Heart left ventricle (tissue), 16 donors: ENCODE measurements at regions of chr1 and their contacts with region 1.

Region 1: DNA sequence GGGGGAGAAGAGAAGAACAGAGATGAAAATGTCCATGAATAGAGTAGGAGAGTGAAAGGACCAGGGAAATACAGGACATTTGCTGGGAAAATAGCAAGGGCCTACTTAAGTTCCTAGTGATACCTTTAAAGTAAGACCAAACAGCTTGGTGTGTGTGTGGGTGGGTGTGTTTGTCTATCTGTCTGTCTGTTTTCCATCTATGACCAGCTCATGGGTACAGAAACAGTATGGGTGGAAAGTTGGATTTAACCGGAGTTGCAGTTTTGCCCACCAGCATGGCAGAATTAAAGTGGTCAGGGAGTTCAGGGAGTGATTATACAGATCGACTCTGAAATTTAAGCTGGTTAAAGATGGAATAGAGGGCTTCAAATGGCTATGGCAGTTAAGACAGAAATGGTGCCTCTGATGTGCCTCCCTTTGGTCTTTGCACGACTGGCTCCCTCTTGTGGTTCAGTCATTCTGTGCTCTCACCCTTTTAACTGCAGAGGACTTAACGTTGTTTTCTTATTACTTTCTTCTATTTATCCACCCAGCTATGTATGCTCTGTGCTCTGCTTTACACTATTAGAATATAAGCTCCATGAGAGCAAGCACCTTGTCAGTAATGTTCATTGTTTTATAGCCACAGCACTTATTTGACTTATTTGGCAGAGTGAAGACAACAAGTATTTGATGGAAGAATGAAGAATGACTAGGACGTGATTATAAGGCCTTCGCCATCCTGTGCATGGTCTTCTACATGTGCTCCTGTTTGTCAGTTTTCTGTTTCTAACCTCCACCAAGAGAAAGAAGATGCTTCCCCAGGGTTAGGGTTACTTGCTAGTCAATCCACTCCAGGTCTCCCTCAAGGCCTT is 72.7 kb upstream of the AK4 start:
- DNase-seq: peak in 3 of 5 donors; percentile 37 to 59 (median 53)
- ATAC-seq: peak; percentile 65 to 89 (median 83)
- H3K4me3 ChIP-seq: no peak overlapping the region
- H3K27ac ChIP-seq: no peak overlapping the region
- H3K4me1 ChIP-seq: no peaks in the 10 kb centered on the region
- H3K27me3 ChIP-seq: no peaks in the 10 kb centered on the region
- CTCF ChIP-seq: peak; percentile 59 to 81 (median 73)
- POLR2A ChIP-seq: no peak

Region 2: GRCh38 chr1:64856553-64856952 is 218.8 kb before region 1 on chr1:
- intact Hi-C with region 1: loop called in 3 of 10 experiments (anchors 1 to 10 kb)
- DNase-seq: peak in 1 of 5 donors; percentile 43
- ATAC-seq: peak in 2 of 4 donors; percentile 23 to 30
- H3K4me3 ChIP-seq: no peak overlapping the region
- H3K27ac ChIP-seq: peak overlapping the region in 1 of 12 donors; percentile 27
- H3K4me1 ChIP-seq: peaks cover 0 to 6% (median 0%) of the 10 kb centered on the region in 12 donors
- H3K27me3 ChIP-seq: no peaks in the 10 kb centered on the region
- CTCF ChIP-seq: no peak
- POLR2A ChIP-seq: no peak

Region 3: GRCh38 chr1:64864018-64864940 is 211.1 kb before region 1 on chr1:
- intact Hi-C with region 1: loop called in 3 of 10 experiments (anchors 1 to 10 kb)
- DNase-seq: peak; percentile 63 to 88 (median 77)
- ATAC-seq: peak; percentile 45 to 94 (median 85)
- H3K4me3 ChIP-seq: no peak overlapping the region
- H3K27ac ChIP-seq: peak overlapping the region in 9 of 12 donors; percentile 17 to 85 (median 39)
- H3K4me1 ChIP-seq: peaks cover 0 to 28% (median 5%) of the 10 kb centered on the region in 12 donors
- H3K27me3 ChIP-seq: no peaks in the 10 kb centered on the region
- CTCF ChIP-seq: no peak
- POLR2A ChIP-seq: no peak

Region 4: DNA sequence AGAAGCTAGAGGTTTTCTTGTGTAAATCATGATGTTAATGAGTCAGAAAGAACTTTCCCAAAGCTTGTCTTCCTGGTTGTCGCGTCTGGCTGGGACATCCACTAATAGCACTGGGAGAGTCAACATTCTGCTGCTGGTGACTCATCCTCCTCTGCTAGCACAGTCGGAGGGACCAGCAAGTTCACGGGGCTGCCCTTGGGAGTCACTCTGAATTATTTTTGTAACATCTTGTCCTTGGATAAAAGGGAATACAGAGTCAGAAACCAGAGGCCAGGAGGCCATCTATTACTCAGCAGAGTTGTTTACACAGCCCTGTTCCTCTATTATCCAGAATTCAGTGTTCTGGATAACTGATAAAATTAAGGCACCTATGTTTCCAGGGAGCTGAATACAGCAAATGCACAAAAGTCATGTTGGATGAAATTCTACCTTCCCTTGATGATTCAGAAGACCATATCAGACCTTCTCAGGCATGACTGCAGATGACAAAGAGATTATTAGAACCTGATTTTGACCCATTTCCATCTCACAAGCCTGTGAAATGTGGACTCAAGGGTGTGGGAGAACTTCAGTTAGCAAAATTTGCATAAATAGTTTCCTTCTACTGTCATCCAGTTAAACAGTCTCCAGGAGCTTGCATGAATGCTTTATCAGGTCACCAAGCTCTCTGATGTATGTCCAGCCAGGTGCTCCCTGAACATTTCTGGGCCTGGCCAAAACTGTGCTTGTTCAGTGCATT is 177.1 kb before region 1 on chr1:
- intact Hi-C with region 1: no loop called
- DNase-seq: peak; percentile 81 to 93 (median 87)
- ATAC-seq: peak; percentile 95 to 98 (median 98)
- H3K4me3 ChIP-seq: no peak overlapping the region
- H3K27ac ChIP-seq: peak overlapping the region; percentile 67 to 87 (median 81)
- H3K4me1 ChIP-seq: peaks cover 5 to 87% (median 37%) of the 10 kb centered on the region in 12 donors
- H3K27me3 ChIP-seq: no peaks in the 10 kb centered on the region
- CTCF ChIP-seq: no peak
- POLR2A ChIP-seq: no peak

Region 5: DNA sequence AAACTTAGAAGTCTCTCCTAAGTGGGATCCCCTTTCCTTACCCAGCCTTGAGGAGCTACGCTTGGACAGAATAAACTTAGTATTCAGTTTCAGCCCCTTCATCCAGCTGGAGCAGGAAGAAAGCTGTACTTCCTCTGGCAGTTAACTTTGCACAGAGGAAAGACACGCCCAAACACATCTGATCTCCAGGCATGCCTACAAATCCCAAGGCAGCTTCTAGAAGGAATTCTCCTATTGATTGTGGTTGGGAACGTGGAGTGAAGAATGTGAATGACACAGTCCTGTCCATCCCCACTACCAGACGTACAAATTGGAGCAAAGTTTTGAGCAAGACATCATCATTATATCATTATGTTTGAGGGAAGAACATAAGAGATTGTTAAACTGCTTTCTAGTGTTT is 66.0 kb after region 1 on chr1:
- intact Hi-C with region 1: loop called in 2 of 10 experiments (anchors 5 kb)
- DNase-seq: no peak
- ATAC-seq: peak in 3 of 4 donors; percentile 29 to 74 (median 39)
- H3K4me3 ChIP-seq: no peak overlapping the region
- H3K27ac ChIP-seq: no peak overlapping the region
- H3K4me1 ChIP-seq: peaks cover 0 to 10% (median 4%) of the 10 kb centered on the region in 12 donors
- H3K27me3 ChIP-seq: no peaks in the 10 kb centered on the region
- CTCF ChIP-seq: no peak
- POLR2A ChIP-seq: no peak

Region 6: DNA sequence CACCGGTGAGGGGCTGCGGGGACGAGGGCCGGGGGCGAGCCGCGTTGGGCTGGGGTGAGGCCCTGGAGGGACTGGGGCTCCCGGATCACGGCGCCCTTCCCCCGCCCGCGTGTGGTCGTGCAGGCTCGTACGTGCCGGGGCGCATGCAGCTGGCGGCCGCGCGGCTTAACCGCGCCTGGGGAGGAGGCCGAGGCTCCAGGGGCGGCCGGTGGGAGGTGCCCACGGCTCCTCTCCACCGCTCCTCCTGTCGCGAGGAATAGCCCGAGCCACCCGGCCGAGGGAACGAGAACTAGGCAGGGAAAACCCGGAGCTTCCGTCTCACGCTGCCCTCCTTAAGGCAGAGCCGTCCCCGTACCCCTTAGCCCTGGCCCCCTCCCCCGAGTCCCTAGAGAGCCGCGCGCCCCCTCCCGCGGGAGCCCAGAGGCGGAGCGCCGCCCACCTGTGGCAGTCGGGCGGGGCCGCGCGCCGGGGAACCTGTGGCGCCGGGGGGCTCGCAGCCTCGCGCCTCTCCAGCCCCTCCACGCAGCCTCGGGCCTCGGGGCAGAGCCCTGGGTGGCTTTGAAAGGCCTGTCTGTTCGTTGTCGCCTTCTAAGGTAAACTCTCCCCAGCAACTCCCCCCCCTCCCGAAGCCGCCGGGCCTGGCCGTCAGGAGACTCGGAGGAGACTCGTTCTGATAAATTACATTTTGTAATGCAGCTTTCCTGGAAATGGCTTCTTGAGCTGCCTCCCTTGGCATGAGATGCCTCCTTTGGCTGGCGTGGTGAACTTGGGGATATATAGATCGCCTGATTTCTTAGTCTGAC is 73.4 kb after region 1 on chr1:
- intact Hi-C with region 1: loop called in 2 of 10 experiments (anchors 5 kb)
- DNase-seq: peak; percentile 41 to 80 (median 53)
- ATAC-seq: peak; percentile 31 to 79 (median 72)
- H3K4me3 ChIP-seq: peak overlapping the region; percentile 70 to 95 (median 90)
- H3K27ac ChIP-seq: peak overlapping the region; percentile 83 to 96 (median 92)
- H3K4me1 ChIP-seq: peaks cover 4 to 29% (median 12%) of the 10 kb centered on the region in 12 donors
- H3K27me3 ChIP-seq: no peaks in the 10 kb centered on the region
- CTCF ChIP-seq: no peak
- POLR2A ChIP-seq: no peak